Activated CD4-positive, alpha-beta memory T cell treated with anti-CD3 and anti-CD28 coated beads for 36 hours (primary cell): ENCODE measurements at regions of chr1 and their contacts with region 1.

Region 1: GRCh38 chr1:93846211-93846991 is 32.6 kb downstream of the DNTTIP2 start:
- DNase-seq: peak; percentile 85
- H3K4me3 Mint-ChIP-seq: peak overlapping the region; percentile 88
- H3K27ac Mint-ChIP-seq: peak overlapping the region; percentile 89
- H3K4me1 Mint-ChIP-seq: peaks cover 27% of the 10 kb centered on the region
- H3K27me3 Mint-ChIP-seq: peaks cover 4% of the 10 kb centered on the region

Region 2: DNA sequence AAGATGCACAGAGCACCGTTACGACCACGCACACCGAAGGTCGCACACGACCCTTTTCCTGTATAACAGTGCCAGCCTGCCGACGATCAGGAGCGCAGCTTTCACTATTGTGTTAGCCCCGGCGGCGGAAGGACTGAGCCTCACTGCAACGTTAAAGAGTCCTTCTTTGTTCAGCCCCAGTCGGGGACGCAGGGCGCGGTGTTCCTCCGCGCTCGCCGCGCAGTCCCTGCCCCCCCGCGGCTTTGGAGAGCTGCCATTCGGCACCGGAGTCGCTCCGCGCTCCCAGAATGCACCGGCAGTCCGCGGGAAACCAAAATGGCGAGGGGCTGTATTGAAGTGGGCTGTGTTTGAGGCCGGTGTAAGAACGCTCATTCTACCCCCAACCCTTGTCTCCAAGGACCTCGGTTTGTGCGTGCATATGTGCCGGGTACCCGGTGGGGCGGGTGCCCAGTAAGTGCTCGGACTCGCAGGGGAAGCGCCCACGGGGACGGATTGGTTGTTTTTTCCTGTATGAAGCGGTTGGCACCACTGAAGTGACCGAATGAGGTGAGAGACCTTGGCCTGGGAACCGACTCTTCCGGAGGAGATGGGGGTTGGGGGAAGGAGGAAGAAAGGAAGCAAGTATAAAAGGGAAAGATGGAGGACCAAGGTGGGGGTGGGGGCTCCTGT is 767.3 kb before region 1 on chr1 and contains the start of gene MTF2:
- CTCF ChIA-PET with region 1: no interaction called
- POLR2A ChIA-PET with region 1: no interaction called
- intact Hi-C with region 1: loop called (anchors 2 kb)
- DNase-seq: peak; percentile 97
- H3K4me3 Mint-ChIP-seq: peak within 1 kb of the TSS; percentile 85
- H3K27ac Mint-ChIP-seq: peak within 1 kb of the TSS; percentile 88
- H3K4me1 Mint-ChIP-seq: peaks cover 28% of the 10 kb centered on the region
- H3K27me3 Mint-ChIP-seq: no peaks in the 10 kb centered on the region
- total RNA-seq, gene MTF2: 53.6 to 55.1 TPM

Region 3: GRCh38 chr1:93345633-93346420 is 500.6 kb before region 1 on chr1 and contains the start of gene DR1:
- CTCF ChIA-PET with region 1: no interaction called
- POLR2A ChIA-PET with region 1: interaction called, 5 read pairs
- intact Hi-C with region 1: loop called (anchors 1 kb)
- DNase-seq: peak; percentile 95
- H3K4me3 Mint-ChIP-seq: peak within 1 kb of the TSS; percentile 94
- H3K27ac Mint-ChIP-seq: peak within 1 kb of the TSS; percentile 98
- H3K4me1 Mint-ChIP-seq: peaks cover 22% of the 10 kb centered on the region
- H3K27me3 Mint-ChIP-seq: no peaks in the 10 kb centered on the region
- total RNA-seq, gene DR1: 74.9 to 77.4 TPM

Region 4: GRCh38 chr1:93629099-93630059 is 217.0 kb before region 1 on chr1:
- CTCF ChIA-PET with region 1: interaction called, 159 read pairs
- POLR2A ChIA-PET with region 1: interaction called, 3 read pairs
- intact Hi-C with region 1: loop called (anchors 1 kb)
- DNase-seq: peak; percentile 43
- H3K4me3 Mint-ChIP-seq: no peak overlapping the region
- H3K27ac Mint-ChIP-seq: no peak overlapping the region
- H3K4me1 Mint-ChIP-seq: no peaks in the 10 kb centered on the region
- H3K27me3 Mint-ChIP-seq: peaks cover 1% of the 10 kb centered on the region

Region 5: DNA sequence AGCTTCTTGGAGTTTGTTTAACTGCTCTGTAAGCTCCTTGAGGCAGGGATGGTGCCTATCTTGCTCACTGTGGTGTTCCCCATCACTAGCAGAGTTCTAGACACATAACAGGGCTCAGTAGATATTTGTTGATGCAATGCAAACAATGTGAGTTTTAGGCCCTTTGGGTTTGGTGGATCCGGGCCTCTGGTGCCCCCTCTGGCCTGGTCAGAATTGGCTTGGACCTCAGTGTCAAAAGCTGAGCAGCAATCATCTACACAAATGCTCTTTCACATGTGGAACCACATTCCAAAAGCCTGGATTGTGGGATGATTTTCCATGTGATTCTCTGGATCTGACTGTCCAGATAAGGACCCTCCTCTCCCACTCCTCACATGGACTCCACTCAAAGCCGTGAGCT is 111.4 kb before region 1 on chr1:
- CTCF ChIA-PET with region 1: no interaction called
- POLR2A ChIA-PET with region 1: no interaction called
- intact Hi-C with region 1: no loop called
- DNase-seq: no peak
- H3K4me3 Mint-ChIP-seq: no peak overlapping the region
- H3K27ac Mint-ChIP-seq: no peak overlapping the region
- H3K4me1 Mint-ChIP-seq: no peaks in the 10 kb centered on the region
- H3K27me3 Mint-ChIP-seq: no peaks in the 10 kb centered on the region

Region 6: GRCh38 chr1:93814059-93814794 is 32.2 kb before region 1 on chr1:
- CTCF ChIA-PET with region 1: interaction called, 76 read pairs
- POLR2A ChIA-PET with region 1: interaction called, 5 read pairs
- intact Hi-C with region 1: loop called (anchors 1 kb)
- DNase-seq: peak; percentile 64
- H3K4me3 Mint-ChIP-seq: no peak overlapping the region
- H3K27ac Mint-ChIP-seq: no peak overlapping the region
- H3K4me1 Mint-ChIP-seq: peaks cover 21% of the 10 kb centered on the region
- H3K27me3 Mint-ChIP-seq: no peaks in the 10 kb centered on the region

Region 7: DNA sequence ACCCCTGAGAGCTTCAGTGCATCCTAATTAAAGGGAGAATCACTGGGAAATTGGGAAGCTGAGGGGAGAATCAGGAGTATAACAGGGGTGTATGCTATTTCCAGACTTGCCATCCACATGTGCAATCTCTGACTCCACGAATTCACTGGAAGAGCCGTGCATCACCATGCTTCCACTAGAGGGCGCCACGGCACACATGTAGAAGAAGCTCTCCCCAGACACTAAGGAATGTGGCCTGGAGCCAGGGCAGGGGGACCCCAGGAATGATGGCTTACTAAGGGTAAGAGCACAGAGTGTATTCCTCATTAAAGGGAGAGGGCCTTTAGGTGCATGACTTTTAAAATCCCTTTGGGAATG is 193.1 kb after region 1 on chr1:
- CTCF ChIA-PET with region 1: no interaction called
- POLR2A ChIA-PET with region 1: no interaction called
- intact Hi-C with region 1: loop called (anchors 5 kb)
- DNase-seq: peak; percentile 71
- H3K4me3 Mint-ChIP-seq: no peak overlapping the region
- H3K27ac Mint-ChIP-seq: no peak overlapping the region
- H3K4me1 Mint-ChIP-seq: peaks cover 18% of the 10 kb centered on the region
- H3K27me3 Mint-ChIP-seq: peaks cover 34% of the 10 kb centered on the region